Activated B cell treated with CpG ODN at 0.5 μM for 24 hours (primary cell): ENCODE measurements at regions of chr16 and their contacts with region 1.

Region 1: GRCh38 chr16:11255737-11256660 is at the start of gene SOCS1:
- DNase-seq: peak; percentile 92
- ATAC-seq: peak; percentile 71
- H3K4me3 Mint-ChIP-seq: peak within 1 kb of the TSS; percentile 98
- H3K27ac Mint-ChIP-seq: peak within 1 kb of the TSS; percentile 98
- H3K4me1 Mint-ChIP-seq: peaks cover 60% of the 10 kb centered on the region
- H3K27me3 Mint-ChIP-seq: no peaks in the 10 kb centered on the region
- CTCF ChIP-seq: peak; percentile 46
- total RNA-seq, gene SOCS1: 68.6 and 76.2 TPM in 2 replicates

Region 2: GRCh38 chr16:10981697-10982216 is 274.2 kb before region 1 on chr16:
- CTCF ChIA-PET with region 1: interaction called, 25 read pairs
- POLR2A ChIA-PET with region 1: interaction called, 67 read pairs
- intact Hi-C with region 1: no loop called
- DNase-seq: peak; percentile 64
- ATAC-seq: peak; percentile 88
- H3K4me3 Mint-ChIP-seq: peak overlapping the region; percentile 69
- H3K27ac Mint-ChIP-seq: peak overlapping the region; percentile 84
- H3K4me1 Mint-ChIP-seq: peaks cover 49% of the 10 kb centered on the region
- H3K27me3 Mint-ChIP-seq: no peaks in the 10 kb centered on the region
- CTCF ChIP-seq: no peak

Region 3: DNA sequence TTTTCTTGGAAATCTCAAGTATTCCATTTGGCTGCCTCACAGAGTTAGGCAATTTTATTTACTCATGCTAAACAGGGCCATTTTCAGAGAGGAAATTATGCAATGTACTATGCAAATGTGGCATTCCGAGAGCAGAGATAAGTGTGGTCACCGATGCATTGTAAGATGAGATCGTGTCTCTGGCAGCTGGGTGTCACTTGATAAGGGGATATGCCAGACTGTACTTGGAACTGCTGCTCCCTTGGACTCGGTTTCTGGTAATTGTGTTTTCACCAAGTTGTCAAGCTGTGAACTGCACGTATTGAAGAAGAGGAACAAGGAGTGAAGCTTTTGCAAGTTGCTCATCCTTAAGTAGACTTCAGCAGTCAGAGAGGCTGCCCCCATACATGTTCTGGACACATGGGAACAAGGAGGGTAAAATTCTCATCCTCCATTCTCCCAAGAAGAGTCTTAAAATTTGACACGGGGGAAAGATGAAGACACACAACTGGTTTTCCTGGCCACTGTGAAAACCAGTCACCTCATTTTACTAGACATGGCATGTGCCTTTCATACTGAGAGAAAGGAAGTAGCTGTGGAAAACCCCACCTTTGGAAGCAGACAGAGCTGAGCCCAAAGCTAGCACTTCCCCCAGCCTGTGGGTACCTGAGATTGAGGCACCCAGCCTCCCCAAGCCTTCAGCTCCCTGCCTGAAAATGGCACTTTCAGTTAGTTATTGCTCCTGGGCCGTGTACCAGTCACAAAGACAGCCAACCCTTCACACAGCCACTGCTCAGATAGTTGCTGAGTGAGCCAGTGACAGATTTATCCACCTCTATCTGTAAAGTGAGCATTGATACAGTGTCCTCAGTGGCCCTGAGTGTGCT is 150.7 kb before region 1 on chr16:
- CTCF ChIA-PET with region 1: interaction called, 4 read pairs
- POLR2A ChIA-PET with region 1: interaction called, 32 read pairs
- intact Hi-C with region 1: loop called (anchors 1 kb)
- DNase-seq: no peak
- ATAC-seq: peak; percentile 87
- H3K4me3 Mint-ChIP-seq: peak overlapping the region; percentile 72
- H3K27ac Mint-ChIP-seq: peak overlapping the region; percentile 92
- H3K4me1 Mint-ChIP-seq: peaks cover 45% of the 10 kb centered on the region
- H3K27me3 Mint-ChIP-seq: no peaks in the 10 kb centered on the region
- CTCF ChIP-seq: no peak

Region 4: GRCh38 chr16:11224096-11224893 is 31.7 kb before region 1 on chr16:
- CTCF ChIA-PET with region 1: interaction called, 21 read pairs
- POLR2A ChIA-PET with region 1: interaction called, 79 read pairs
- intact Hi-C with region 1: loop called (anchors 1 kb)
- DNase-seq: peak; percentile 34
- ATAC-seq: peak; percentile 31
- H3K4me3 Mint-ChIP-seq: peak overlapping the region; percentile 69
- H3K27ac Mint-ChIP-seq: peak overlapping the region; percentile 83
- H3K4me1 Mint-ChIP-seq: peaks cover 37% of the 10 kb centered on the region
- H3K27me3 Mint-ChIP-seq: no peaks in the 10 kb centered on the region
- CTCF ChIP-seq: no peak

Region 5: GRCh38 chr16:11328172-11329070 is 72.4 kb after region 1 on chr16:
- CTCF ChIA-PET with region 1: interaction called, 49 read pairs
- POLR2A ChIA-PET with region 1: interaction called, 157 read pairs
- intact Hi-C with region 1: loop called (anchors 1 kb)
- DNase-seq: peak; percentile 66
- ATAC-seq: peak; percentile 65
- H3K4me3 Mint-ChIP-seq: peak overlapping the region; percentile 80
- H3K27ac Mint-ChIP-seq: peak overlapping the region; percentile 94
- H3K4me1 Mint-ChIP-seq: peaks cover 72% of the 10 kb centered on the region
- H3K27me3 Mint-ChIP-seq: no peaks in the 10 kb centered on the region
- CTCF ChIP-seq: no peak

Region 6: GRCh38 chr16:11370084-11370931 is 114.3 kb after region 1 on chr16:
- CTCF ChIA-PET with region 1: interaction called, 10 read pairs
- POLR2A ChIA-PET with region 1: interaction called, 80 read pairs
- intact Hi-C with region 1: loop called (anchors 1 kb)
- DNase-seq: peak; percentile 53
- ATAC-seq: peak; percentile 96
- H3K4me3 Mint-ChIP-seq: peak overlapping the region; percentile 69
- H3K27ac Mint-ChIP-seq: peak overlapping the region; percentile 80
- H3K4me1 Mint-ChIP-seq: peaks cover 40% of the 10 kb centered on the region
- H3K27me3 Mint-ChIP-seq: no peaks in the 10 kb centered on the region
- CTCF ChIP-seq: no peak